Esophagus squamous epithelium (tissue), 5 donors: ENCODE measurements at regions of chr18 and their contacts with region 1.

Region 1: GRCh38 chr18:54052732-54053429 is 171.6 kb downstream of the MBD2 start:
- DNase-seq: no peak
- H3K4me3 ChIP-seq: no peak overlapping the region
- H3K27ac ChIP-seq: no peak overlapping the region
- H3K4me1 ChIP-seq: no peaks in the 10 kb centered on the region
- H3K27me3 ChIP-seq: no peaks in the 10 kb centered on the region
- CTCF ChIP-seq: no peak
- POLR2A ChIP-seq: no peak

Region 2: GRCh38 chr18:53710080-53710479 is 342.8 kb before region 1 on chr18:
- intact Hi-C with region 1: no loop called
- DNase-seq: no peak
- H3K4me3 ChIP-seq: no peak overlapping the region
- H3K27ac ChIP-seq: no peak overlapping the region
- H3K4me1 ChIP-seq: no peaks in the 10 kb centered on the region
- H3K27me3 ChIP-seq: no peaks in the 10 kb centered on the region
- CTCF ChIP-seq: no peak
- POLR2A ChIP-seq: no peak

Region 3: GRCh38 chr18:54004830-54005229 is 48.1 kb before region 1 on chr18:
- intact Hi-C with region 1: loop called (anchors 5 kb)
- DNase-seq: no peak
- H3K4me3 ChIP-seq: no peak overlapping the region
- H3K27ac ChIP-seq: no peak overlapping the region
- H3K4me1 ChIP-seq: no peaks in the 10 kb centered on the region
- H3K27me3 ChIP-seq: no peaks in the 10 kb centered on the region
- CTCF ChIP-seq: peak in 1 of 6 experiments; percentile 11
- POLR2A ChIP-seq: no peak